ENCODE measurements at regions of chr6 and their contacts with region 1.

Region 1: GRCh38 chr6:127971945-127972391 is 71.1 kb upstream of the THEMIS start:
- DNase-seq: peak; percentile 64
- ATAC-seq: peak; percentile 89
- H3K4me3 Mint-ChIP-seq: peak overlapping the region; percentile 70
- H3K27ac Mint-ChIP-seq: peak overlapping the region; percentile 90
- H3K4me1 Mint-ChIP-seq: peaks cover 60% of the 10 kb centered on the region
- H3K27me3 Mint-ChIP-seq: no peaks in the 10 kb centered on the region

Region 2: GRCh38 chr6:127484212-127484858 is 487.6 kb before region 1 on chr6:
- CTCF ChIA-PET with region 1: no interaction called
- POLR2A ChIA-PET with region 1: no interaction called
- intact Hi-C with region 1: loop called in 1 of 2 experiments (anchors 10 kb)
- DNase-seq: no peak
- ATAC-seq: peak; percentile 93
- H3K4me3 Mint-ChIP-seq: peak overlapping the region; percentile 55
- H3K27ac Mint-ChIP-seq: peak overlapping the region; percentile 5
- H3K4me1 Mint-ChIP-seq: peaks cover 26% of the 10 kb centered on the region
- H3K27me3 Mint-ChIP-seq: peaks cover 20% of the 10 kb centered on the region

Region 3: GRCh38 chr6:127748290-127748689 is 223.7 kb before region 1 on chr6:
- CTCF ChIA-PET with region 1: no interaction called
- POLR2A ChIA-PET with region 1: no interaction called
- intact Hi-C with region 1: loop called in 1 of 2 experiments (anchors 5 kb)
- DNase-seq: no peak
- ATAC-seq: peak; percentile 76
- H3K4me3 Mint-ChIP-seq: peak overlapping the region; percentile 23
- H3K27ac Mint-ChIP-seq: peak overlapping the region; percentile 83
- H3K4me1 Mint-ChIP-seq: peaks cover 61% of the 10 kb centered on the region
- H3K27me3 Mint-ChIP-seq: no peaks in the 10 kb centered on the region

Region 4: DNA sequence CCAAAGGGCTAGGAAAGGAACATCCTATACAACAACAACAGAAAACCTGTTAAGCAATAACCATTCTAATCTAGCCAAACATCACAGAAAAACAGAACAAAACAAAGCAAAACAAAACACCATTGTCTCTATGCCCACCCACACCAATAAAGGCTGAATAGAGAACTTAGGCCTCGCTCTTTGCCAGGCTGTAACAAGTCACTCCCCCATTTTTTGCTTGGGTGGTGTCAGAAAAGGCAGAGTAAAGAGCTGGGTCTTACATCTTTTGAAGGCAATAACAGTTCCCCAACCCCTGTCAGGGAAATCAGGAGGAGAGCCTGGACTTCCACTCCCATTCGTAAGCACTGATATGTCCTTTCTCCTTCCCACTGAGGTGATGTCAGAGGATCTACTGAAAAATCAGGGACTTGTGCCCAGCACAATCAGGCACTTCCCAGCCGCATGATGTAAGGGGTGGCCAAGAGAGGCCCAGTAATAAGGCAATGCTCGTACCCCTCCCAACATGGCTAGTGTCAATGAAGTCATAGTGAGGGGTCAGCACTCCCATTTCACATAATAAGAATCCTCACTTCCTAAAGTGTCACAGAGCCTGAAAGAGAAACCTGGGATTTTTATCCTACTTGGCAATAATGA is 102.1 kb before region 1 on chr6:
- CTCF ChIA-PET with region 1: no interaction called
- POLR2A ChIA-PET with region 1: no interaction called
- intact Hi-C with region 1: no loop called
- DNase-seq: no peak
- ATAC-seq: peak; percentile 45
- H3K4me3 Mint-ChIP-seq: peak overlapping the region; percentile 3
- H3K27ac Mint-ChIP-seq: peak overlapping the region; percentile 74
- H3K4me1 Mint-ChIP-seq: peaks cover 56% of the 10 kb centered on the region
- H3K27me3 Mint-ChIP-seq: no peaks in the 10 kb centered on the region

Region 5: GRCh38 chr6:127900935-127901334 is 71.0 kb before region 1 on chr6 and contains the start of gene THEMIS:
- CTCF ChIA-PET with region 1: no interaction called
- POLR2A ChIA-PET with region 1: no interaction called
- intact Hi-C with region 1: loop called (anchors 1 kb)
- DNase-seq: peak; percentile 64
- ATAC-seq: peak; percentile 67
- H3K4me3 Mint-ChIP-seq: peak within 1 kb of the TSS; percentile 91
- H3K27ac Mint-ChIP-seq: peak within 1 kb of the TSS; percentile 97
- H3K4me1 Mint-ChIP-seq: peaks cover 66% of the 10 kb centered on the region
- H3K27me3 Mint-ChIP-seq: no peaks in the 10 kb centered on the region
- total RNA-seq, gene THEMIS: 22.9 to 24.5 TPM

Region 6: GRCh38 chr6:127938701-127939100 is 33.3 kb before region 1 on chr6:
- CTCF ChIA-PET with region 1: interaction called, 3 read pairs
- POLR2A ChIA-PET with region 1: interaction called, 3 read pairs
- intact Hi-C with region 1: loop called (anchors 1 kb)
- DNase-seq: no peak
- ATAC-seq: peak; percentile 15
- H3K4me3 Mint-ChIP-seq: no peak overlapping the region
- H3K27ac Mint-ChIP-seq: peak overlapping the region; percentile 48
- H3K4me1 Mint-ChIP-seq: peaks cover 47% of the 10 kb centered on the region
- H3K27me3 Mint-ChIP-seq: no peaks in the 10 kb centered on the region

Region 7: DNA sequence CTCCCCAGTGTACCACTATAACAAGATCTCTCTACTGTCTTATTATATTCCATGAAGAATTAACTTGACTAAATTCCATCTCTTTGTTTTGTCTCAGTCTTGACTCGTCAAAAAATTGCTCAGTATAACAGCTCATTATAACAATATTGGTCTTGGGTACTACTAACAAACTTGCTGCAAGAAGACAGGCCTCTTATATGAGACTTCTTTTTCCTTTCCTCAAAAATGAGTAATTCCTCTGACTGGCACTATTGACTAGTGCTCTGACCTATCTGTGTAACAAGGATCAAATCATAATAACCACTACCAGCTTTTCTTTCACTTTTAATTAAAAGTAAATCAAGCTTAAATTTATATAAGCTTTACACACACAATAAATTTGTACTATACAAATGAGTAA is 20.2 kb after region 1 on chr6:
- CTCF ChIA-PET with region 1: interaction called, 4 read pairs
- POLR2A ChIA-PET with region 1: no interaction called
- intact Hi-C with region 1: loop called in 1 of 2 experiments (anchors 2 kb)
- DNase-seq: no peak
- ATAC-seq: peak; percentile 88
- H3K4me3 Mint-ChIP-seq: no peak overlapping the region
- H3K27ac Mint-ChIP-seq: no peak overlapping the region
- H3K4me1 Mint-ChIP-seq: peaks cover 17% of the 10 kb centered on the region
- H3K27me3 Mint-ChIP-seq: no peaks in the 10 kb centered on the region

Region 8: DNA sequence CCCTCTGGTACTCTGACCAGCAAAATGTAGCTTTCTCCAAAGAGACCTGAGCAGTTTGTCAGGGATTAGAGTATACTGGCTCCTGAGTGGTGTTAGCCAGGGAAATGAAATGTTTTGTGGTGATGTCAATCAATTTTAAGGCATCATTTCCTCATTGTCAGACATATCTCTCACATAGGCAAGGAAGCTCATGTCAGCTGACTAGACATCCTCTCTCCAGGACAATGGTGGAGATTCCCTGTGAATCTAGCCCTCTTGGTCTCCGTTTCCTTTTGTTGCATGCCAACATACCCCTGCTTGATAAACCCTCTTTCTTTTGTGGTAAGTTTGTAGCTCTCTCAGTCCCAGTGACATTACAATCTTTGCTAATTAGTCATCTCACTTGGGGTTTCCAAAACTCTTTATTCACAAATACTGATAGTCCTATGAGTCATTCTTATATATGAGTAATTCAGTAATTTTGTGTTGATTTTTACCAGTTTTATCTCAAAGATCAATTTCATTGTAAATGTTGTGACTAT is 684.1 kb after region 1 on chr6:
- CTCF ChIA-PET with region 1: no interaction called
- POLR2A ChIA-PET with region 1: no interaction called
- intact Hi-C with region 1: loop called in 1 of 2 experiments (anchors 5 kb)
- DNase-seq: peak; percentile 27
- ATAC-seq: peak; percentile 96
- H3K4me3 Mint-ChIP-seq: peak overlapping the region; percentile 12
- H3K27ac Mint-ChIP-seq: peak overlapping the region; percentile 89
- H3K4me1 Mint-ChIP-seq: peaks cover 38% of the 10 kb centered on the region
- H3K27me3 Mint-ChIP-seq: peaks cover 10% of the 10 kb centered on the region

Measured in activated CD4-positive, alpha-beta T cell treated with anti-CD3 and anti-CD28 coated beads for 36 hours (primary cell).